ENCODE measurements at regions of chr17 and their contacts with region 1.

Region 1: GRCh38 chr17:54727624-54728023 is 173.0 kb upstream of the TOM1L1 start:
- DNase-seq: no peak
- ATAC-seq: no peak
- H3K4me3 ChIP-seq: no peak overlapping the region
- H3K27ac ChIP-seq: no peak overlapping the region
- H3K4me1 ChIP-seq: no peaks in the 10 kb centered on the region
- H3K27me3 ChIP-seq: no peaks in the 10 kb centered on the region
- CTCF ChIP-seq: no peak
- POLR2A ChIP-seq: no peak

Region 2: GRCh38 chr17:54785643-54786268 is 58.1 kb after region 1 on chr17:
- in situ Hi-C with region 1: no loop called
- intact Hi-C with region 1: loop called (anchors 10 kb)
- DNase-seq: no peak
- ATAC-seq: no peak
- H3K4me3 ChIP-seq: no peak overlapping the region
- H3K27ac ChIP-seq: no peak overlapping the region
- H3K4me1 ChIP-seq: no peaks in the 10 kb centered on the region
- H3K27me3 ChIP-seq: no peaks in the 10 kb centered on the region
- CTCF ChIP-seq: no peak
- POLR2A ChIP-seq: no peak

Region 3: DNA sequence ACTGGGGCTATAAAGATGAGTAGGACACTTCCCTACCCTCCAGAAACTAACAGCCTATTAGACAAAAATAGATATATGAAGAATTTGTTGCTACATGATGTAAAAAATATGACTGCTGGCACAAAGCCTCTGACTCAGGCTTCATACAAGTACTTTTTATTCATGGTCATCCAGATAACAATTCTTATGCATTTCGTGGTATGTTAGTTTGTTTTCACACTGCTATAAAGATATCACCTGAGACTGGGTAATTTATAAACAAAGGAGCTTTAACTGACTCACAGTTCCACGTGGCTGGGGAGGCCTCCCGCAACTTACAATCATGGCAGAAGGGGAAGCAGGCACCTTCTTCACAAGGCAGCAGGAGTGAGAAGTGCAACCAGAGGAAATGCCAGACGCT is 424.6 kb after region 1 on chr17:
- in situ Hi-C with region 1: no loop called
- intact Hi-C with region 1: no loop called
- DNase-seq: no peak
- ATAC-seq: no peak
- H3K4me3 ChIP-seq: no peak overlapping the region
- H3K27ac ChIP-seq: no peak overlapping the region
- H3K4me1 ChIP-seq: peaks cover 0 to 16% of the 10 kb centered on the region in 2 donors
- H3K27me3 ChIP-seq: no peaks in the 10 kb centered on the region
- CTCF ChIP-seq: no peak
- POLR2A ChIP-seq: no peak